Calu3 (cell line): ENCODE measurements at regions of chr19 and their contacts with region 1.

Region 1: DNA sequence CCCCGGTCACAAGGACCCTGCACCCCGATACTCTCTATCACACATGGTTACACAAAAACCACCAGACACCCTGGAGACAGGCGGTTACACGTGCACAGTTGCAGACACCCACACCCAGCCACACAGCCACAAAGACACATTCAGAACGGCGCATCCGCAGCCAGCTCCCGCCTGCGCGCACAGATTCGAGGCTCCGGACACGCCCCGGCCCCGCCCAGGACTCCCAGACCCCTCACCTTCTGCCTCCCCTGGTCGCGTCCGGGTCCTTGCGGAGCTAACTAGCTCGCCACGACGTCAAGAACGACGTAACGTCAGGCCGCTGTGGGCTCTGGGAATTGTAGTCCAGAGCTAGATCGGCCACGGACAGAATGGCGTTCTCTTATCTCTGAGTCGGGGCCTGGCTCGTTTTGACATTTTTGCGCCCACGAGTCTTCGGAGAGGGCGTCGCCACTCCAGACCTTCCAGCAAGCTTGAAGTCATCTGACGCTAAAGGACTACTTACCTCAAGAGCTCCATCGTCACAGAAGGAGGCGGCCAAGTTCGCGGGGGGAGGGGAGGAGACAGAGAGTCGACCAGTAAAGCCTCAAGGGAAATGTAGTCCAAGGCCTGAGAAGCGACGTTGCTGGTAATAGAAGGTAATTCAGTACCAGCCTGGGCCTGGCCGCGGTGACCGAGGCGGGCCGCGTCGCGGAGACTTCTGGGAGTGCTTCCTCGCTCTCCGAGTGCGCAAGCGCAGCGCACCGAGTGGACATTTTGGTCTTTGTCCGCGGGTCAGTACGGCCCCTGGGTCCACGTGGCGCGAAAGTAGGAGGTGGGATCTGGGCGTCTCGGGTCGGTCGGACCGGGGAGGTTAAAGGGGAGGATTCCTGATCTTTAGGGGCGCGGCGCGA is at the starts of genes ZNF146 and ZNF565:
- DNase-seq: peak; percentile 97
- H3K4me3 Mint-ChIP-seq: no peak within 1 kb of the TSS
- H3K27ac Mint-ChIP-seq: no peak within 1 kb of the TSS
- H3K4me1 Mint-ChIP-seq: no peaks in the 10 kb centered on the region
- H3K27me3 Mint-ChIP-seq: no peaks in the 10 kb centered on the region
- CTCF ChIP-seq: no peak
- total RNA-seq, gene ZNF146: 112 and 123 TPM in 2 replicates
- total RNA-seq, gene ZNF565: 6.3 and 6.7 TPM in 2 replicates

Region 2: DNA sequence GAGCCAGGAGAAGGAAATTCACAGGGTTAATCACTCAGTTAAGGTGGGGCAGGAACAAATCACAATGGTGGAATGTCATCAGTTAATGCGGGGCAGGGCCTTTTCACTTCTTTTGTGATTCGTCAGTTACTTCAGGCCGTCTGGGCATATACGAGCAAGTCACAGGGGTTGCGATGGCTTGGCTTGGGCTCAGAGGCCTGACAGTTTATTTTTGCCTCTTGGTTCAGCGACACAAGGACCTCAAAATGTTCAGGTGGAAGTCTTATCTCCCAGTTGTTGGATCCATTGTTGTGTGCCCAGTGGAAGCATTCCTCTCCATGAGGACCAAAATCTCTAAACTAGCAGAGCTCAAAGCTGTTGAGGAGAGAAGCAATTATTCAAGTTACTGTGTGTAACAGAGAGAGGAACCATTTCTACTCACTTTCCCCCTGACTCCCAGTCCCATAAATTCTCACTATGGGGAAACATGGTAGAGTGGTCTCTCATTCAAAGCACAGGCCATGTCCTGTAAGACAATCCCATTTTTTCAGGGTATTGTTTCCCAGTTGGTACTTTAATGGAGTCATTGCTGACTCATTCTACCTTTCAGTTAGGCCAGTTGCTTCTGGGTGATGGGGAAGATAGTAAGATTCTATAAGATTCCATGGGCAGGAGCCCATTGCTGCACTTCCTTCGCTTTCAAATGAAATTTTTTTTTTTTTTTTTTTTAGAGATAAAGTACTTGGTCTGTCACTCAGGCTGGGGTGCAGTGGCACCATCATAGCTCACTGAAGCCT is 53.6 kb before region 1 on chr19:
- CTCF ChIA-PET with region 1: no interaction called
- intact Hi-C with region 1: no loop called
- DNase-seq: no peak
- H3K4me3 Mint-ChIP-seq: no peak overlapping the region
- H3K27ac Mint-ChIP-seq: no peak overlapping the region
- H3K4me1 Mint-ChIP-seq: peaks cover 15% of the 10 kb centered on the region
- H3K27me3 Mint-ChIP-seq: no peaks in the 10 kb centered on the region
- CTCF ChIP-seq: no peak

Region 3: DNA sequence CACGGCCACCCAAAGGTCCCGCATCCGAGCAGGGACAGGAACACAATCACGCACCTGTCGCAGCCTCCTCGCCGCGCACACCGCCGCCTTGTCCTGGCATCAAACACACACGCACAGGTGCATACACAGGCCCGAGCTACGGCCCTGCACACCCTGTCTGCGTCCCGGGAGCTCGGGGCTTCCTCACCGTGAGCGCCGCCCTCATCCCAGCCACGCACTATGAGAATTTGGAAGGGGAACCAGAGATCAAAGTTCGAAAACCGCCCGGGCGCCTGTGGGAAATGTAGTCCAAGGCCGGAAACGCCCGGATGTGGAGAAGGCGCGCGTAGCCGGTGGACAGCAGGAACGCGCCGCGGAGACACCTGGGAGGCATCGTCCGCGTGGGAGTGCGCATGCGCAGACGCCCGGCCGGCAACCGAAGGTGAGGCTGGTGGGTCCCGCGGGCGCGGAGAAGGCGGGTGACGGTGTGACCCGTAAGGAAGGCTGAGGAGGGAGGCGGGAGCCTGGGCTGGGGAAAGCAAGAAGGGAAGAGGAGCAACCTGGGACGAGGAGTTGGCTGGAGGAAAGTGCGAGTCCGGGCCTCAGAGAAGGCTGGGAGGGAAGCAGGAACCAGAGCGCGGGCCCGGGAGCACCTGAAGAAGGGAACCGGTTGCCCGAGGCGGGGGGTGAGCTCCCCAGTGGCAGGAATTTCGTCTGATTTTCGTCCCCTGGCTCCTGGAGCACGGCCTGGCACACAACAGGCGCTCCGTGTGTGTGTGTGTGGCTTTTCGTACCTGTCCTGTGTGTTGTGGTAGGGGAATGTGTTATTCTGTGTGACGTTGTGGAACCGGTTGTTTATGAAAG is 472.8 kb after region 1 on chr19 and contains the start of gene ZNF567:
- CTCF ChIA-PET with region 1: no interaction called
- intact Hi-C with region 1: loop called (anchors 5 kb)
- DNase-seq: peak; percentile 99
- H3K4me3 Mint-ChIP-seq: peak within 1 kb of the TSS; percentile 100
- H3K27ac Mint-ChIP-seq: peak within 1 kb of the TSS; percentile 99
- H3K4me1 Mint-ChIP-seq: peaks cover 27% of the 10 kb centered on the region
- H3K27me3 Mint-ChIP-seq: no peaks in the 10 kb centered on the region
- CTCF ChIP-seq: no peak
- total RNA-seq, gene ZNF567: 11.0 TPM in 2 replicates